WTC11 (cell line): ENCODE measurements at regions of chr3 and their contacts with region 1.

Region 1: DNA sequence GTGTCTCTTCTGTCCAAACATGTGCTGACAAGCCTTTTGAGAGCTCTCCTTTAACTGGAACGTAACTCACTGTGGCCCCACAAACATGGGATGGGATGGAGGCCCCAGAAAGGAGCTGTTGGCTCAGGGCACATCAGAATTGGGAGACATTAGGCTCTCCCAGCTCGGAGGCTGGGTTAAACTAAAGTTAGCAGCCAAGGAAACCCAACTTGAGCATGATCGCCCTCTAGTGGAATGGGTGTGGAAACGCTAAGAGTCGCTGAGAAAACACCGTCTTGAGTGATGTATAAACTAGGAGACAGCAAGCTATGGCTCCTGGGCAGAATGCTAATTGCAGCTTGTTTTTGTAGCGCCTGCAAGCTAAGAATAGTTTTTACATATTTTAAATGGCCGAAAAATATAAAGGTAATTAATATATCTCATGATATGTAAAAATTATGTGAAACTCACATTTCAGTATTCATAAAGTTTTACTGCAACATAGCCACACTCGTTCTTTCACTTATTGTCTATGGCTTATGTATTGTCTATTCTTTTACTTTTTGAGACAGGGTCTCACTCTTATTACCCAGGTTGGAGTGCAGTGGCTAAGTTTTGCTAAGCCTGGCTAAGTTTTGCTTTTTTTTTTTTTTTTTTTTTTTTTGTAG is 138.8 kb upstream of the HACD2 start:
- DNase-seq: peak; percentile 63
- ATAC-seq: peak; percentile 70
- H3K4me3 Mint-ChIP-seq: no peak overlapping the region
- H3K27ac Mint-ChIP-seq: peak overlapping the region; percentile 64; the same call in 1 of the 2 replicates
- H3K4me1 Mint-ChIP-seq: no peaks in the 10 kb centered on the region; the same call in none of the 2 replicates
- H3K27me3 Mint-ChIP-seq: no peaks in the 10 kb centered on the region; the same call in 1 of the 2 replicates
- CTCF ChIP-seq: peak; percentile 63

Region 2: GRCh38 chr3:123328851-123329635 is 394.6 kb before region 1 on chr3:
- CTCF ChIA-PET with region 1: no interaction called
- POLR2A ChIA-PET with region 1: no interaction called
- DNase-seq: peak; percentile 90
- ATAC-seq: peak; percentile 86
- H3K4me3 Mint-ChIP-seq: no peak overlapping the region
- H3K27ac Mint-ChIP-seq: no peak overlapping the region
- H3K4me1 Mint-ChIP-seq: peaks cover 20% of the 10 kb centered on the region
- H3K27me3 Mint-ChIP-seq: no peaks in the 10 kb centered on the region
- CTCF ChIP-seq: peak; percentile 94

Region 3: DNA sequence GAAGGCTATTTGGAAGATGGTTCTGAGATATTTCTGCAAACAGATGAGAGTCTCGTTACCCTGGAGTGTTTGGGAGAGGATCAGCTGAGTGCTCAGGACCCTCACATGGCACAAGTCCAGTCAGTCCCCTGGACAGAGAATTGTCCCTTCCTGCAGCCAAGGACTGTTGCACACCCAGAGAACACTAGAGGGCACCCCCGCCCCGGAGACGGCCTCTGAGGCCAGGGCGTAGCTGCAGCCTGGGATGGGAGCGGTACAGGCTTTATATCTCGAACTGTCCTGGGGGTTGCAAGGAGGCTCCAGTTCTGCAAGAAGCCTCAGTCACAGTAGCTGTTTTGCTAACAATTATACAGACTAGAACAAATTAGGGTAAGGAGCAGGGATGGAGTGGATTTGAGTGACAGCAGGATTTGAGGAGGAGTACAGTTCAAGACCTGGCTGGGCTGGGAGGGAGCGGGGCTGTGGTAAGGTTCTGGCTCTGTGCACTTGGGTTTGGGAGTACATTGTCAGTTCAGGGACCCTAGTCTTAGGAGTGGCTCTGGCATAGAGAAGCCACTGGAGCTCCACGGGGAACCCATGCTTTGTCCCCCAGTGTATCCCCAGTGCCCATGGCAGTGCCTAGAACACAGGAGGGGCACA is 71.2 kb before region 1 on chr3:
- CTCF ChIA-PET with region 1: interaction called, 141 read pairs
- POLR2A ChIA-PET with region 1: no interaction called
- DNase-seq: peak; percentile 89
- ATAC-seq: peak; percentile 96
- H3K4me3 Mint-ChIP-seq: no peak overlapping the region
- H3K27ac Mint-ChIP-seq: 0 out of 2 replicates have a peak overlapping the region, but pooled peaks have one; percentile 14
- H3K4me1 Mint-ChIP-seq: peaks cover 19% of the 10 kb centered on the region
- H3K27me3 Mint-ChIP-seq: no peaks in the 10 kb centered on the region; the same call in 1 of the 2 replicates
- CTCF ChIP-seq: peak; percentile 66

Region 4: GRCh38 chr3:123672429-123673146 is 51.1 kb before region 1 on chr3:
- CTCF ChIA-PET with region 1: interaction called, 10 read pairs
- POLR2A ChIA-PET with region 1: no interaction called
- DNase-seq: no peak
- ATAC-seq: no peak
- H3K4me3 Mint-ChIP-seq: no peak overlapping the region
- H3K27ac Mint-ChIP-seq: no peak overlapping the region
- H3K4me1 Mint-ChIP-seq: peaks cover 5% of the 10 kb centered on the region
- H3K27me3 Mint-ChIP-seq: no peaks in the 10 kb centered on the region
- CTCF ChIP-seq: no peak

Region 5: DNA sequence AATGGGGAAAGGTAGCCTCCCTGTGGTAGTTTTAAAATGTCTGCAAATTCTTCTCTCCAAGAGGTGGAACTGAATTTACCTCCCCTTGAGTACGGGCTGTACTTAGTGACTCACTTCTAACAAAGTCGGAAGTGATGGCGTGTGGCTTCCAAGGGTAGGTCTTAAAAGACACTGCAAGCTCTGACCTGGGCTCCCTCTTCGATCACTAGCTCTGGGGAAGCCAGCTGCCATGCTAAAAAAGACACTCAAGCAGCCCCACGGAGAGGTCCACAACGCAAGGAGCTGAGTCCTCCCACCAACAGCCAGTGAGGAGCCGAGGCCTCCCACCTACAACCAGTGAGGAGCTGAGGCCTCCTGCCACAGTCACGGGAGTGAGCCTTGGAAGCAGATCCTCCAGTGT is 16.8 kb before region 1 on chr3:
- CTCF ChIA-PET with region 1: interaction called, 29 read pairs
- POLR2A ChIA-PET with region 1: no interaction called
- DNase-seq: no peak
- ATAC-seq: no peak
- H3K4me3 Mint-ChIP-seq: no peak overlapping the region
- H3K27ac Mint-ChIP-seq: no peak overlapping the region
- H3K4me1 Mint-ChIP-seq: peaks cover 7% of the 10 kb centered on the region
- H3K27me3 Mint-ChIP-seq: no peaks in the 10 kb centered on the region
- CTCF ChIP-seq: no peak

Region 6: GRCh38 chr3:123745184-123745855 is 21.7 kb after region 1 on chr3:
- CTCF ChIA-PET with region 1: interaction called, 11 read pairs
- POLR2A ChIA-PET with region 1: no interaction called
- DNase-seq: no peak
- ATAC-seq: peak; percentile 44; the same call in 1 of the 2 replicates
- H3K4me3 Mint-ChIP-seq: no peak overlapping the region
- H3K27ac Mint-ChIP-seq: no peak overlapping the region
- H3K4me1 Mint-ChIP-seq: peaks cover under 1% of the 10 kb centered on the region; the same call in 1 of the 2 replicates
- H3K27me3 Mint-ChIP-seq: no peaks in the 10 kb centered on the region
- CTCF ChIP-seq: no peak

Region 7: GRCh38 chr3:123776071-123776782 is 52.6 kb after region 1 on chr3:
- CTCF ChIA-PET with region 1: no interaction called
- POLR2A ChIA-PET with region 1: no interaction called
- DNase-seq: no peak
- ATAC-seq: no peak
- H3K4me3 Mint-ChIP-seq: no peak overlapping the region
- H3K27ac Mint-ChIP-seq: no peak overlapping the region
- H3K4me1 Mint-ChIP-seq: no peaks in the 10 kb centered on the region
- H3K27me3 Mint-ChIP-seq: no peaks in the 10 kb centered on the region
- CTCF ChIP-seq: no peak

Region 8: DNA sequence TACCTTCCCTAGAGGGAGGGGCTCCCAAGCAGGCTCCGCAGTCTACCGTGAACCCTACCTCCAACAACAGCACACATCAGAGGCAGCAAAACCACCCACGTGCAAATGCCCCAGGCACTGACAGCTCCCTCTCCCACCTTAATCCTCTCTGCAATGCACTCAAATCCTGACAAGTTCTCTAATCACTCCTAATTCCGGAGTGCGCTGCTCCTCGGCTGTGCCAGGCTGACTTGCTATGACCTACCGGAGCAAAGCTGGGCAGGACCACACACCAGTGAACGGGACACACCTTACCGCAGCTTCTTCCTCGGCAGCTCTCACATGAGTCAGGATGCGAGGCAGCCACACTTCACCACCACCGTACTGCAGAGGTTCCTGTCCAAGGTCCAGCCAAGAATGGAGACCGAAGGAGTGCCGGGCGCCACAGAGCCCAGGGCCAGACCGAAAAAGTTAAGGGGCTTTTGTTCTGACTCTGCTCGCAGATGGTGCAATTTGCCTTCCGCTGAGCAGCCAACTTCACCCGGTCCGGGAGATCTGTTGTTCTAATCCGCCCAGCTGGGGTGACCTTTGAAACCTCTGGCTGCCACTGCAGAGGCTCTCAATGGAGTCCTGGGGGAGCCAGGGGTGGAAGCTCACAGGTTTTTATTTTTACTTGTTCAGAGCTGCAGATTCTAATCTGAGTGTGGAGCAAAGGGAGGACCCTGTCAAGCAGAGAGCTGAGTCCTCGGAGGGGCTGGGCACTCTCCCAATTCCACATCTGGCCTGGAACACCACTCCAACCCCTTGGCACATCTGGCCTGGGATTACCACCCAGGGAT is 76.1 kb after region 1 on chr3:
- CTCF ChIA-PET with region 1: interaction called, 10 read pairs
- POLR2A ChIA-PET with region 1: no interaction called
- DNase-seq: no peak
- ATAC-seq: peak; percentile 14; the same call in 1 of the 2 replicates
- H3K4me3 Mint-ChIP-seq: no peak overlapping the region
- H3K27ac Mint-ChIP-seq: no peak overlapping the region
- H3K4me1 Mint-ChIP-seq: peaks cover 3% of the 10 kb centered on the region
- H3K27me3 Mint-ChIP-seq: no peaks in the 10 kb centered on the region
- CTCF ChIP-seq: no peak